ENCODE measurements at regions of chr12 and their contacts with region 1.

Region 1: GRCh38 chr12:50504798-50505385 is at the start of gene DIP2B:
- DNase-seq: peak; percentile 89
- H3K4me3 ChIP-seq: peak within 1 kb of the TSS; percentile 73 to 97 (median 92)
- H3K27ac ChIP-seq: peak within 1 kb of the TSS; percentile 95
- H3K4me1 ChIP-seq: peaks cover 23% of the 10 kb centered on the region
- H3K27me3 ChIP-seq: no peaks in the 10 kb centered on the region
- CTCF ChIP-seq: peak; percentile 88 to 92
- total RNA-seq, gene DIP2B: 34.8 to 98.0 TPM

Region 2: DNA sequence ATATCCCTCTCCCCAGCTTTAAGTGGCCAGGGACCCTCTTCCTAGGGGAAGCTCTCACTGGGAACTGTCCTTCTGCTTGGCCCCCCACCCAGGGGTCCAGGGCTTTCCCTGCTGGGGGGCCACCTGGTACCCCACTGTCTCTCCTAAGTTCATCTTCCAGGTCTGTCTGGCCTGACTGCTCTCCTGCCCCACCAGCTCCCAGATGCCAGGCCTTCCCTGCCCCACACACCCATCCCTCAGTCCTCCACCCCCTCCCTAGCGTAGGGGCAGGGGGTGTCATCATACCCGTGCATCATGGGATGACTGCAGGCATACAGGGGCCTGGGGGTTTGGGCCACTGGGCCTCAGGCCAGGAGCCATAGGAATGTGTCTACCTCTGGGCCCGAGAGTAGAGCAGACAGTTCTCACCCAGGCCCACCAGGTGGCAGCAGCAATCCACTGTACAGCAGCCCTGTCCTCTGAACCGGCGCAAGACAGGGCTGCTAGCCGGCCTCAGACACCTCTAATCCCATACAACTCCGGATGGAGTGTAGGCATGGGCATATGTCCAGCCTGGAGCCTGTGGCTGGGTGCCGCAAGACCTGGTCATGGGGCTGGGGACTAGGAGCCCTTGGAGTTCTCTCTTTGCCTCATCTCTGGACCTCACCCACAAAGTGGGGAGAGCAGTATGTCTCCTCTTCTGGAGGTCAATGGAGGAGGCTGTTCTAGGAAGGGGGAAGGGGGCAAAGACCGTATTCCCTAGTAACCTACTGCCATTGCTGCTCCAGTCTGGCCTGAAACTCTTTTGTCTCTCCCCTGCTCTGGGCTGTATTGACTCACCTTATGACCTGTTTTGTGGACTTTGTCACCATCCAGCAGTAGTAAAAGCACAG is 429.7 kb before region 1 on chr12:
- CTCF ChIA-PET with region 1: no interaction called
- dilution Hi-C with region 1: no loop called
- in situ Hi-C with region 1: no loop called
- intact Hi-C with region 1: loop called (anchors 1 kb)
- DNase-seq: peak; percentile 62
- H3K4me3 ChIP-seq: no peak overlapping the region
- H3K27ac ChIP-seq: no peak overlapping the region
- H3K4me1 ChIP-seq: peaks cover 3% of the 10 kb centered on the region
- H3K27me3 ChIP-seq: no peaks in the 10 kb centered on the region
- CTCF ChIP-seq: peak; percentile 84 to 94

Region 3: GRCh38 chr12:50542448-50542847 is 37.6 kb after region 1 on chr12:
- CTCF ChIA-PET with region 1: interaction called, 8 read pairs
- dilution Hi-C with region 1: no loop called
- in situ Hi-C with region 1: no loop called
- intact Hi-C with region 1: loop called (anchors 1 kb)
- DNase-seq: peak; percentile 99
- H3K4me3 ChIP-seq: no peak overlapping the region
- H3K27ac ChIP-seq: peak overlapping the region; percentile 98
- H3K4me1 ChIP-seq: peaks cover 38% of the 10 kb centered on the region
- H3K27me3 ChIP-seq: no peaks in the 10 kb centered on the region
- CTCF ChIP-seq: no peak

Region 4: GRCh38 chr12:50620109-50620977 is 115.5 kb after region 1 on chr12:
- CTCF ChIA-PET with region 1: no interaction called
- dilution Hi-C with region 1: no loop called
- in situ Hi-C with region 1: no loop called
- intact Hi-C with region 1: loop called (anchors 1 kb)
- DNase-seq: peak; percentile 88
- H3K4me3 ChIP-seq: no peak overlapping the region
- H3K27ac ChIP-seq: peak overlapping the region; percentile 76
- H3K4me1 ChIP-seq: peaks cover 65% of the 10 kb centered on the region
- H3K27me3 ChIP-seq: no peaks in the 10 kb centered on the region
- CTCF ChIP-seq: peak in 1 of 2 donors; percentile 38

Region 5: GRCh38 chr12:50708631-50709030 is 203.7 kb after region 1 on chr12:
- CTCF ChIA-PET with region 1: no interaction called
- dilution Hi-C with region 1: no loop called
- in situ Hi-C with region 1: no loop called
- intact Hi-C with region 1: no loop called
- DNase-seq: no peak
- H3K4me3 ChIP-seq: no peak overlapping the region
- H3K27ac ChIP-seq: no peak overlapping the region
- H3K4me1 ChIP-seq: no peaks in the 10 kb centered on the region
- H3K27me3 ChIP-seq: no peaks in the 10 kb centered on the region
- CTCF ChIP-seq: no peak

Region 6: DNA sequence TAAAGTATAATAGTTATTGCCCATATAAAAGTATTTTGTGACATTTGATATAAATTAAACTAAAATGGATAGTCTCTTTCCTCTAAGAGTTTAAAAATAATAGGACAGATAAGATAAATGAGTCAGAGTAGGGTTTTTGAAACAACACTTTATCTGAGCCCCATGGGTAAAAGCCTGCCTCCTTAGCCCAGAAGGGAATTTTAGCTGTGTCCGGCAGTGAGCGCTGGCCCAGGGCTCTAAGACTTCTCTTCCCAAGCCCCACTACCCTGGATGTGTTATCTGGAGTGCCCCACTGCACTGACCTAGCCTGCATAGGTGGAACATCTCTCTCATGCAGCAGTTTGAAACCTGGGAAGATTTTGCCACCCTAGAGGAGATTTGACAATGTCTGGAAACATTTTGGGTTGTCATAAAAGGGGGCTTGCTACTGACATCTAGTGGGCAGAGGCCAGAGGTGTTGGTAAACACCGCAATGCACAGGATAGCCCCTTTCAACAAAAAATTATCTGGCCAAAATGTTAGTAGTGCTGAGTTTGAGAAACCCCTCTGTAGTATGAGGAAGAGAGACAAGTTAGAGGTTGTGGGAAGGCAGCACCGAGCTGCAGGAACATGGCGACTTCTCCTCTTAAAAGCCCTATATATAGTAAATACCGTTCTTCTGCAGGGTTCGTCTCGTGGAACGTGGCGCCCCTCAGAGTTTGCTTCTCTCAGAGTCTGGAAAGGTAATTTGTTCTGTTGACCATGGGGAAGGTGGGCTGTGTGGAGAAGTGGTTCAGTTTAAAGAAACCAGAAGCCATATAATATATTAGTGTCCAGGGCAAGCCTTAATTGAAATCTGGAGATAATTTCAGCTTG is 229.7 kb after region 1 on chr12:
- CTCF ChIA-PET with region 1: no interaction called
- dilution Hi-C with region 1: no loop called
- in situ Hi-C with region 1: no loop called
- intact Hi-C with region 1: loop called (anchors 2 kb)
- DNase-seq: no peak
- H3K4me3 ChIP-seq: no peak overlapping the region
- H3K27ac ChIP-seq: no peak overlapping the region
- H3K4me1 ChIP-seq: no peaks in the 10 kb centered on the region
- H3K27me3 ChIP-seq: no peaks in the 10 kb centered on the region
- CTCF ChIP-seq: peak; percentile 53 to 57

Region 7: GRCh38 chr12:51025836-51026638 is 521.1 kb after region 1 on chr12 and contains the start of gene SLC11A2:
- CTCF ChIA-PET with region 1: interaction called, 4 read pairs
- dilution Hi-C with region 1: no loop called
- in situ Hi-C with region 1: no loop called
- intact Hi-C with region 1: loop called (anchors 1 kb)
- DNase-seq: peak; percentile 95
- H3K4me3 ChIP-seq: peak within 1 kb of the TSS; percentile 73 to 87 (median 82)
- H3K27ac ChIP-seq: peak within 1 kb of the TSS; percentile 98
- H3K4me1 ChIP-seq: peaks cover 39% of the 10 kb centered on the region
- H3K27me3 ChIP-seq: no peaks in the 10 kb centered on the region
- CTCF ChIP-seq: no peak
- total RNA-seq, gene SLC11A2: 42.5 to 56.3 TPM

Region 8: DNA sequence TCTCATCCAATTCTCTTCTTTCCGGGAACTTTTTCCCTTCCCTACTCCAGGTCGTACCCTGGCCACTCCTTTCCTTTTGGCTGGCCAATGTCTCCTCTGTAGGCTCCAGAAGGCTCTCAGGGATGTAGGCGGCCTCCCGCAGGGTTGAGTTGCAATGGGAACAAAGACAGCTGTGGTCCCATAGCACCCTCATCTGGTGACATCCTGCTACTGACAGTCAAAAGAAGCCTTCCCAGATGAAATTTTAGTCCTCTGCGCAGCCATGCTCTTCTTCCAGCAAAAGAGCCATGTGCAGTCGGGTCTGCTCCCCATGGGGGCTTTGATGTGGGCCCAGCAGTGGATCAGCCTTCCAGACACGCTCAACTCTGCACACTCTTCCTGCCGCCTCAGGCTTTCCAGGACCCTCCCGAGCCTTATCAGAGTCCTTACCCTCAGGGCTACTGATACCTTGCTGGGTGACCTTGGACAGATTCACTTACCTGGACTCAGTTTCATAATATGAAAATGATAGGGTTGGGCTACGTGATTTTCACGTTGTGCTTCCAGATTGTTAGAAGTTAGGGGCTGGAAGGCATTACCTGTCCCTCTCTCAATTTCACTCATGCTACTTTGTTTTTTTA is 847.1 kb after region 1 on chr12:
- CTCF ChIA-PET with region 1: no interaction called
- dilution Hi-C with region 1: no loop called
- in situ Hi-C with region 1: no loop called
- intact Hi-C with region 1: loop called (anchors 5 kb)
- DNase-seq: peak; percentile 31
- H3K4me3 ChIP-seq: no peak overlapping the region
- H3K27ac ChIP-seq: no peak overlapping the region
- H3K4me1 ChIP-seq: no peaks in the 10 kb centered on the region
- H3K27me3 ChIP-seq: no peaks in the 10 kb centered on the region
- CTCF ChIP-seq: peak; percentile 57 to 71